Endothelial cell of umbilical vein (primary cell): ENCODE measurements at regions of chr14 and their contacts with region 1.

Region 1: DNA sequence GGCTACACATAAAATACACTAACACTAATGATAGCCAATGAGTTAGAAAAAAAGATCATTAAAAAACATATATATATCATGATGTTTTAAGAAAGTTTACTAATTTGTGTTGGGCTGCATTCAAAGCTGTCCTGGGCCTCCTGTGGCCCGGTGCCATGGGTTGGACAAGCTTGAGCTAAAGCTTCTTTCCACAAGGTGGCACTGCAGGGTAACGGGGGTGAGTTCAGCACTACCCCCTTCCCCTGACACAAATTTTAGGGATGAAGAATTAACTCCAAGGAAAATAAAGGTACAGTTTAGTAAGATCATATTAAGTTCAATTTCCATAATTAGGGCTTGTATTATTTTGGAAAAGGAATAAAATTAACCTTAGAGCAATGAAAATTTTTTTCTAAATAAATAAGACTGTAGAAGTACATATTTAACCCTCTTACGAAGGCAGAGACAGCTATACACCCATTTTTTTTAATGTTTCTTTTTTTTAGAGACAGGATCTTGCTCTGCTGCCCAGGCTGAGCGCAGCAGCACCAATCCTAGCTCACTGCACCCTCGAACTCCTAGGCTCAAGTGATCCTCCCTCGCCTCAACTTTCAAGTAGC is 38.9 kb downstream of the PPP1R13B start:
- DNase-seq: peak; percentile 69
- H3K4me3 ChIP-seq: no peak overlapping the region
- H3K27ac ChIP-seq: no peak overlapping the region
- H3K4me1 ChIP-seq: peaks cover 5% of the 10 kb centered on the region
- H3K27me3 ChIP-seq: no peaks in the 10 kb centered on the region
- CTCF ChIP-seq: peak; percentile 69 to 84
- POLR2A ChIP-seq: no peak

Region 2: DNA sequence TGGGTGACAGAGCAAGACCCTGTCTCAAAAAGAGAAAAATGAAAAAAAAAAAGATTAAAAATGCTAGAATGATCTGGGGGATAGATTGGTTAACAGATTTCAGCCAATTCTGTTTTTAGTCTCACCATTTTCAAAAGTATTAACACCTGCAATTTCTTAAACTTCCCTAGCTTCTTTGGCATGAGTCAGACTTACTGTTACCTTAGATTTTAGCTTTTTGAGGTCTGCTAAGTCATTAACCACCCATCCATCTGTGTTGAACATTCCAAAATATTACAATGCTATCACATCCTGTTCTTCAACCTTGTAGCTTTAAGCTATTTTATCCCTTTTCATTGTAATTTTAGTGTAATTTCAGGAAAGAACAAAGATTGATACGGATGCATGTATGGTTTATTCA is 20.4 kb before region 1 on chr14:
- CTCF ChIA-PET with region 1: interaction called, 12 read pairs
- POLR2A ChIA-PET with region 1: no interaction called
- dilution Hi-C with region 1: no loop called
- intact Hi-C with region 1: no loop called
- DNase-seq: no peak
- H3K4me3 ChIP-seq: no peak overlapping the region
- H3K27ac ChIP-seq: no peak overlapping the region
- H3K4me1 ChIP-seq: no peaks in the 10 kb centered on the region
- H3K27me3 ChIP-seq: no peaks in the 10 kb centered on the region
- CTCF ChIP-seq: no peak
- POLR2A ChIP-seq: no peak

Region 3: GRCh38 chr14:103828315-103828967 is 19.9 kb after region 1 on chr14:
- CTCF ChIA-PET with region 1: interaction called, 16 read pairs
- POLR2A ChIA-PET with region 1: no interaction called
- dilution Hi-C with region 1: no loop called
- intact Hi-C with region 1: no loop called
- DNase-seq: peak; percentile 74
- H3K4me3 ChIP-seq: no peak overlapping the region
- H3K27ac ChIP-seq: no peak overlapping the region
- H3K4me1 ChIP-seq: peaks cover 3% of the 10 kb centered on the region
- H3K27me3 ChIP-seq: no peaks in the 10 kb centered on the region
- CTCF ChIP-seq: no peak
- POLR2A ChIP-seq: no peak

Region 4: DNA sequence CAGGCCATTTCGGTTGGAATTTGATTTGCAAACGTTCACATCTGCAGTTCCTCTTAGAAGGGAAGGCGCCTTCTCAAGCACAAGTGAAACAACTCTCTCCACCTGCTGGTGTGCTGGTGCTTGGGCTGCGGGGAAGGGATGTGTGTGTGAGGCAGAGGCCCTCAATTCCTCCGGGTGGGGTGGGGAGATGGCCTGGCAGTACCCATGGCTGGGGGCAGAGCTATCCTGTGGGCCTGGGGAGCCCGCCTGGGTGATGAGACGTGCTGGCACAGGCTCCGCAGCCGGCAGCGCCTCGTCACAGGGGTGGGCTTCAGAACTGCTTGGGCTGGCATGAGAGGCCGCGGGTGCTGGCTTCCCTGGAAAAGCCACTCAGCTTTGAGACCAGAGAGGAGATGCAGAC is 90.8 kb after region 1 on chr14:
- CTCF ChIA-PET with region 1: interaction called, 253 read pairs
- POLR2A ChIA-PET with region 1: no interaction called
- dilution Hi-C with region 1: no loop called
- intact Hi-C with region 1: no loop called
- DNase-seq: no peak
- H3K4me3 ChIP-seq: no peak overlapping the region
- H3K27ac ChIP-seq: no peak overlapping the region
- H3K4me1 ChIP-seq: peaks cover 2% of the 10 kb centered on the region
- H3K27me3 ChIP-seq: no peaks in the 10 kb centered on the region
- CTCF ChIP-seq: no peak
- POLR2A ChIP-seq: no peak

Region 5: GRCh38 chr14:103923863-103924262 is 115.4 kb after region 1 on chr14:
- CTCF ChIA-PET with region 1: interaction called, 11 read pairs
- POLR2A ChIA-PET with region 1: no interaction called
- dilution Hi-C with region 1: no loop called
- intact Hi-C with region 1: no loop called
- DNase-seq: peak; percentile 87
- H3K4me3 ChIP-seq: no peak overlapping the region
- H3K27ac ChIP-seq: no peak overlapping the region
- H3K4me1 ChIP-seq: peaks cover 2% of the 10 kb centered on the region
- H3K27me3 ChIP-seq: peaks cover 0 to 10% of the 10 kb centered on the region in 2 experiments
- CTCF ChIP-seq: no peak
- POLR2A ChIP-seq: no peak

Region 6: DNA sequence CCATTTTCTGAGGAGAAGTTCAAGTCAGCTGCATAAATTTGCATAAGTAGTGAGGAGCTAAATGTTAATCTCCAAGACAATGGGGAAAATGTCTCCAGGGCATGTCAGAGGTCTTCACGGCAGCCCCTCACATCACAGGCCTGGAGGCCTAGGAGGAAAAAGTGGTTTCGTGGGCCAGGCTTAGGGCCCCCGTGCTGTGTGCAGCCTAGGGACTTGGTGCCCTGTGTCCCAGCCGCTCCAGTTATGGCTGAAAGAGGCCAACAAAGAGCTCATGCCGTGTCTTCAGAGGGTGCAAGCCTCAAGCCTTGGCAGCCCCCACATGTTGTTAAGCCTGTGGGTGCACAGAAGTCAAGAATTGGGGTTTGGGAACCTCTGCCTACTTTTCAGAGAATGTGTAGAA is 175.7 kb after region 1 on chr14:
- CTCF ChIA-PET with region 1: interaction called, 143 read pairs
- POLR2A ChIA-PET with region 1: no interaction called
- dilution Hi-C with region 1: no loop called
- intact Hi-C with region 1: loop called (anchors 1 kb)
- DNase-seq: no peak
- H3K4me3 ChIP-seq: no peak overlapping the region
- H3K27ac ChIP-seq: no peak overlapping the region
- H3K4me1 ChIP-seq: no peaks in the 10 kb centered on the region
- H3K27me3 ChIP-seq: peaks cover 0 to 3% of the 10 kb centered on the region in 2 experiments
- CTCF ChIP-seq: no peak
- POLR2A ChIP-seq: no peak